HEK293 (cell line): ENCODE measurements at regions of chr12 and their contacts with region 1.

Region 1: GRCh38 chr12:53757095-53757770 is 5.5 kb upstream of the CISTR start:
- H3K4me3 ChIP-seq: peak overlapping the region; percentile 12
- H3K27ac ChIP-seq: no peak overlapping the region
- H3K4me1 ChIP-seq: peaks cover 16% of the 10 kb centered on the region
- CTCF ChIP-seq: peak; percentile 66

Region 2: DNA sequence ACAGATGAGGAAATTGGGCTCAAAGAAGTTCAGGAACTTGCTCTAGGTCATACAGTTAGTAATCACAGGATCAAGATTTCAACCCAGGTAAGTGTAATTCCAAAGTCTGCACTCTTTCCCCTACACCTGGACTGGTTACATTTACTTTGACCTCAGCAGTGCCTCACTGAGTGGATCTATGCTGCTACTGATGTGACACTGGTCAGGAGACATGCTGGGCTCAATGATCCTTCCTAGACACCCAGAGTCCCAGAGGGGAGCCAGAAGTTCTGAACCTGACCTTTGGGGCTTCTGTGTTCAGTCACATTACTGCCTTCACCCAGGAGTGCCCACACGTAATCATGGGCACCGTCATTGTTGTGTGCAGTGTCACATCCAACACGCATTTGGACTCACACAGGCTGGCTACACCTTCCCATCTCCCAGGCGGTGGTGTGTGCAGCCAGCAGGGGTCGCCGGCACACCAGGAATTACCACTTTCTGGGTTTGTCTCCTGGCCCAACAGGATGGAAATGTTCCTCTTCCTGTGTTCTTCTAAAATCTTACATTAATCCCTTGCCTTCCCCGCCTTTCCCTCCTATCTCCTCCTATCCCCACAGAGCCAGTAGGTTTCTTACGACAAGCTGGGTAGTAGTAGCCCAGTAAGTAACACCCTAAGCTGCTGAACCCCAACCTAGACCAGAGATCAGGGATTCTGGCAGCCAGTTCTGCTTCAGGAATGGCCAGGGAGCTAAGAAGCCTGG is 55.5 kb before region 1 on chr12:
- CTCF ChIA-PET with region 1: interaction called, 23 read pairs
- POLR2A ChIA-PET with region 1: interaction called, 3 read pairs
- H3K4me3 ChIP-seq: no peak overlapping the region
- H3K27ac ChIP-seq: no peak overlapping the region
- H3K4me1 ChIP-seq: peaks cover 1% of the 10 kb centered on the region; the same call in 1 of the 2 replicates
- CTCF ChIP-seq: peak; percentile 97

Region 3: GRCh38 chr12:53770281-53770680 is 13.0 kb after region 1 on chr12:
- CTCF ChIA-PET with region 1: interaction called, 26 read pairs
- POLR2A ChIA-PET with region 1: no interaction called
- H3K4me3 ChIP-seq: no peak overlapping the region
- H3K27ac ChIP-seq: no peak overlapping the region
- H3K4me1 ChIP-seq: peaks cover 3% of the 10 kb centered on the region
- CTCF ChIP-seq: no peak

Region 4: DNA sequence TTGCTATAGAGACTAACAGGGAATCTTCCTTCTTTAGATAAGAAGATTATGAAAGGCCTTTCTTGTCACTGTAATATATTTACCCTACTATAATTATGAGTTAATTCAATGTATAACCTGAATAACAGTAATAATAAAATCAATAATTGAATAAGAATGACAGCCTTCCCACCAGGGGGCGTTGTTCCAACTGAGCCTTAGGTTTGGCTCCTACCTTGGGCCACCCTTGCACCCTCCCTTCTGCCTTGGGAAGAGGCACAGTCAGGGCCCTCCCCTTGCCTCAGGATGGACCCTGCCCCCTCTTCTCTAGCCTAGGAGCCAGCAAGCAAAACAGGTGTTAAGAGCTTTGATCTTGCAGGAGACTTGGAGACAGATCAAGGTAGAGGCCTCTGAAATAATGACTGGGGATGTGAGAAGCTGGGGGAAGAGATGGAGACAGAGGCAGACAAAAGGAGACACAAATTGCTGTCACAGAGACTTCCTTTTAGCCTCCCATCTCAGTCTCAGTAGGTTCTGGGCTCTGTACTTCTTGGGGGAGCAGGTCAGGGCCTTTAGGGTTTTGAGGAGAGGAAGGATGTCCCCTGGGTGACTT is 34.6 kb after region 1 on chr12:
- CTCF ChIA-PET with region 1: interaction called, 12 read pairs
- POLR2A ChIA-PET with region 1: no interaction called
- H3K4me3 ChIP-seq: no peak overlapping the region
- H3K27ac ChIP-seq: no peak overlapping the region
- H3K4me1 ChIP-seq: no peaks in the 10 kb centered on the region
- CTCF ChIP-seq: no peak

Region 5: DNA sequence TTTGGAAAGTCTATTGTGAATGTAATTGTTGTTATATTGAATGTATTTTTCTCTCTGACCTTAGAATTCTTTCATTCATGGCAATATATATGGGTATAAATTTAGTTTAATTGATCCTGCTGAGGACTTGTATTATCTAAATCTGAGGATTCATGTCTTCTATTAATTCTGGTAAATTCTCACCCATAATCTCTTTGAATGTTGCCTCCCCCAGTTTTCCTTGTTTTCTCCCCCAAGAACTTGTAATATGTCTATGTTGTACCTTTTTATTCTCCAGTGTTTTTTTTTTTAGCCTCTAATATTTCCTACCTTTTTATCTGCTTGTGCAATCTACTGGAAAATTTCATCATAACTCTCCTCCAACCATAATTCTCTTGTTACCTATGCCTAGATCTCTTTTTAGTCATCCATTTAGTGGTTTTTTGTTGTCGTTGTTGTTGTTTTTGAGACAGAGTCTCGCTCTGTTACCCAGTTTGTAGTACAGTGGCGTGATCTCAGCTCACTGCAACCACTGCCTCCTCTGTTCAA is 160.0 kb after region 1 on chr12:
- CTCF ChIA-PET with region 1: no interaction called
- POLR2A ChIA-PET with region 1: no interaction called
- H3K4me3 ChIP-seq: no peak overlapping the region
- H3K27ac ChIP-seq: no peak overlapping the region
- H3K4me1 ChIP-seq: peaks cover 7% of the 10 kb centered on the region; the same call in 1 of the 2 replicates
- CTCF ChIP-seq: no peak

Region 6: GRCh38 chr12:54207484-54208294 is 450.5 kb after region 1 on chr12:
- CTCF ChIA-PET with region 1: interaction called, 10 read pairs
- POLR2A ChIA-PET with region 1: no interaction called
- H3K4me3 ChIP-seq: no peak overlapping the region
- H3K27ac ChIP-seq: 0 out of 2 replicates have a peak overlapping the region, but pooled peaks have one; percentile 13
- H3K4me1 ChIP-seq: no peaks in the 10 kb centered on the region
- CTCF ChIP-seq: peak; percentile 89